Activated T-helper 1 cell treated with anti-CD3 and anti-CD28 coated beads, Interleukin-12 subunit alpha, Interleukin-12 subunit beta, Interleukin-2, Interleukin-4 antibody, amounts not matched to agents 30 ng/mL and 10 ng/mL and 1 ng/mL, durations not matched to agents 14 hours and 24 hours and 36 hours (primary cell): ENCODE measurements at regions of chr11 and their contacts with region 1.

Region 1: DNA sequence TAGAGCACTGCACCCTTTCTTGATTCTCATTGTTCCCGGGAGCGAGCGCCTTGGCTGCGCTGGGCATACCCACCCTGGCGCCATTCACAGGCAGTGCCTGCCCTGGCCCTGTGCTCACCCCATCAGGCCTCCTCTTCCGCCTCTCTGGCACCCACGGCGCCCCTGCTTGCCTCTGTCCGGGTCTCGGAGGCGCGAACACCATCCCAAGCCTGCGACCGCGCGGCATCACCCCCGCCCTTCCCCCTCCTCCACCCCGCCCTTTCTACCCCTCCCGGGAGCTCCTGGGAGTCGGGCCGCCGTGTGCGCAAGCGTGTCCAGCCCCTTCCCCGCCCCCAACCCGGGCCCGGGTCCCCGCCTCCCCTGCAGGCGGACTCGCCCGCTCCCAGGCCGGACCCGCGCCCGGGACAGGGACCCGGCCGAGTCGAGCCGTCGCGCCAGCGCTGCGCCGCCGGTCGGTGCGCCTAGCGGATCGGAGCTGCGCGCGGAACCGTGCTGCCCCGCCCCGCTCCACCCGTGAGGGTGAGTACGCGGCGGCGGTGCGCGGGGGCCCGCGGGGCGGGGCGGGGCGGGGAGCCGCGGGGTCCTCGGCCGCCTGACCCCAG is at the start of gene ST3GAL4:
- DNase-seq: peak; percentile 64
- H3K4me3 Mint-ChIP-seq: peak within 1 kb of the TSS; percentile 95
- H3K27ac Mint-ChIP-seq: peak within 1 kb of the TSS; percentile 92
- H3K4me1 Mint-ChIP-seq: peaks cover 36% of the 10 kb centered on the region
- H3K27me3 Mint-ChIP-seq: no peaks in the 10 kb centered on the region
- total RNA-seq, gene ST3GAL4: 13.2 and 14.1 TPM in 2 replicates

Region 2: GRCh38 chr11:125433454-125434121 is 921.8 kb before region 1 on chr11:
- intact Hi-C with region 1: no loop called
- DNase-seq: no peak
- H3K4me3 Mint-ChIP-seq: no peak overlapping the region
- H3K27ac Mint-ChIP-seq: no peak overlapping the region
- H3K4me1 Mint-ChIP-seq: no peaks in the 10 kb centered on the region
- H3K27me3 Mint-ChIP-seq: peaks cover 9% of the 10 kb centered on the region

Region 3: GRCh38 chr11:125902927-125903710 is 452.3 kb before region 1 on chr11 and contains the start of gene PUS3:
- intact Hi-C with region 1: loop called (anchors 1 kb)
- DNase-seq: peak; percentile 85
- H3K4me3 Mint-ChIP-seq: peak within 1 kb of the TSS; percentile 98
- H3K27ac Mint-ChIP-seq: peak within 1 kb of the TSS; percentile 88
- H3K4me1 Mint-ChIP-seq: peaks cover 28% of the 10 kb centered on the region
- H3K27me3 Mint-ChIP-seq: peaks cover 34% of the 10 kb centered on the region
- total RNA-seq, gene PUS3: 16.5 and 23.6 TPM in 2 replicates

Region 4: DNA sequence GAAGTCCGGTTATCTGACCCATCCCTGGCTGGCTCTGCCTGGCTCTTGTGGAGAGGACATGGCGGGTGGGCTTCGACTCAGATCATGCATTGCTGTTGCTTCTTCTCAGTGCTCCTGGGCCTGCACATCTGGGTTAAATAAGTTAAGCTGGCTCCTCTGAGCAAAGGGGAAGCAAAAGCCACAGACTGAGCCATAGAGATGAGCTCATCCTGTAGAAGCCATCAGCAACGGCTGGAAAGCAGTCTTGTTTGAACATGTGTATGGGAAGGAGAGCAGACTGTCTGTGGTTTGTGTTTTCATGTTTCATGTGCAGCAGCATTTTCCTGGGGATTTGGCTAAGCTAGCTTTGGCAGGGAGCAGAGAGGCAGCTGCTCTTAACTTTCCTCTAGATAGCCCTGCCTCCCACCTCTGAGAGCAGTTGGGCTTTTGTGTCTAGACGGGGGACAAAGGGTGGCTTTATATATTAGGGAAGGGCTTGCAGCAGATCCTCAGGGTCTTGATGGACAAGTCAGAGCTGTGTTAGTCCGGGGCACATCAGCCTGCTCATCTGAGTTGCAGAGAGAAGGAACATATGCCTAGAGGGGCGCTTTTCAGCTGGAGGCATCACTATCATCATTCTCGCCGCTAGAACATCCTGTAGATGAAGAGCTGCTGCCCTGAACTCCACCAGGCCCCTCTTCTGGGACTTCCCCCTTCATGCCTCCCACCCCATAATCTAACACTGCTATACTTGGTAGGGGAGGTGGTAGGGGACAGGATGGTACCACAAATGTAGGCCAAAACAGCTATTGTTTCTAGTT is 36.7 kb before region 1 on chr11:
- intact Hi-C with region 1: loop called (anchors 5 kb)
- DNase-seq: peak; percentile 21
- H3K4me3 Mint-ChIP-seq: peak overlapping the region; percentile 22
- H3K27ac Mint-ChIP-seq: peak overlapping the region; percentile 73
- H3K4me1 Mint-ChIP-seq: peaks cover 45% of the 10 kb centered on the region
- H3K27me3 Mint-ChIP-seq: no peaks in the 10 kb centered on the region

Region 5: GRCh38 chr11:126416542-126417090 is 61.2 kb after region 1 on chr11:
- intact Hi-C with region 1: loop called (anchors 1 kb)
- DNase-seq: peak; percentile 59
- H3K4me3 Mint-ChIP-seq: peak overlapping the region; percentile 62
- H3K27ac Mint-ChIP-seq: no peak overlapping the region
- H3K4me1 Mint-ChIP-seq: peaks cover 17% of the 10 kb centered on the region
- H3K27me3 Mint-ChIP-seq: peaks cover 5% of the 10 kb centered on the region